Mucosa of descending colon (tissue), 3 donors: ENCODE measurements at regions of chr4 and their contacts with region 1.

Region 1: DNA sequence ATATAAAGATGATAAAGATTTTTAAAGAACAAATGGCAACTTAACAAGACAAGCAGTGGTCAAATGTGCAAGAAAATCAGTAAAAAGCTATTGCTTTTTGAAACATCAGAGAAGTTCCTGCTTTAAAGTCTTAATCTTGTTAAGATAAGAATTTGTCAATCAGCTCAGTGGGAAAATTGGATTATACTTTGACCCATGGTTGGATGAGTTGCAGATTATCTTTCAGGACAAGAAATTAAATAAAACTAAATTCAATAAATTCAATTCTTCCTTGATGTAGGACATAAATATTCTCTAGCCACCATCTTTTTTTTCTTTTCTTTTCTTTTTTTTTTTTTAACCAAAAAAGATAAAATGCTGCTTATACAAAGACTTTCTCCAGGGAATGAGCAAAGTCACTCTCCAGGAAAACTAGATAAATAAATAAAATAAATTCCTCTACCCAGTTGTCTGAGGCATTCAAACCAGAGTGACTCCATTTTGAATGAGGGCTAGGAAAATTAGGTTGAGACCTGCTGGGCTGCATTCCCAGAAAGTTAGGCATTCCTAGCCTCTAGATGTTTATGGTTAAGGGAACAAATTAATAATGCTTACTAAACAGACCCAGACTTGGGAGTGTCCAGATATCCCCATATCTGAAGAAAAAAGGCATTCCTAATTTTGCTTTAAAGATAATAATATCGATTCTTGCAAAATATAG is 211.2 kb downstream of the SNCA start:
- DNase-seq: no peak
- ATAC-seq: no peak
- H3K4me3 ChIP-seq: no peak overlapping the region
- H3K4me1 ChIP-seq: no peaks in the 10 kb centered on the region
- CTCF ChIP-seq: no peak

Region 2: GRCh38 chr4:87644286-87644685 is 1981.5 kb before region 1 on chr4:
- intact Hi-C with region 1: loop called in 1 of 2 experiments (anchors 5 kb)
- DNase-seq: no peak
- ATAC-seq: no peak
- H3K4me3 ChIP-seq: no peak overlapping the region
- H3K4me1 ChIP-seq: no peaks in the 10 kb centered on the region
- CTCF ChIP-seq: no peak

Region 3: GRCh38 chr4:89549907-89550306 is 75.8 kb before region 1 on chr4:
- intact Hi-C with region 1: no loop called
- DNase-seq: no peak
- ATAC-seq: no peak
- H3K4me3 ChIP-seq: no peak overlapping the region
- H3K4me1 ChIP-seq: no peaks in the 10 kb centered on the region
- CTCF ChIP-seq: no peak